Activated CD4-positive, alpha-beta T cell treated with anti-CD3 and anti-CD28 coated beads for 36 hours (primary cell): ENCODE measurements at regions of chr10 and their contacts with region 1.

Region 1: DNA sequence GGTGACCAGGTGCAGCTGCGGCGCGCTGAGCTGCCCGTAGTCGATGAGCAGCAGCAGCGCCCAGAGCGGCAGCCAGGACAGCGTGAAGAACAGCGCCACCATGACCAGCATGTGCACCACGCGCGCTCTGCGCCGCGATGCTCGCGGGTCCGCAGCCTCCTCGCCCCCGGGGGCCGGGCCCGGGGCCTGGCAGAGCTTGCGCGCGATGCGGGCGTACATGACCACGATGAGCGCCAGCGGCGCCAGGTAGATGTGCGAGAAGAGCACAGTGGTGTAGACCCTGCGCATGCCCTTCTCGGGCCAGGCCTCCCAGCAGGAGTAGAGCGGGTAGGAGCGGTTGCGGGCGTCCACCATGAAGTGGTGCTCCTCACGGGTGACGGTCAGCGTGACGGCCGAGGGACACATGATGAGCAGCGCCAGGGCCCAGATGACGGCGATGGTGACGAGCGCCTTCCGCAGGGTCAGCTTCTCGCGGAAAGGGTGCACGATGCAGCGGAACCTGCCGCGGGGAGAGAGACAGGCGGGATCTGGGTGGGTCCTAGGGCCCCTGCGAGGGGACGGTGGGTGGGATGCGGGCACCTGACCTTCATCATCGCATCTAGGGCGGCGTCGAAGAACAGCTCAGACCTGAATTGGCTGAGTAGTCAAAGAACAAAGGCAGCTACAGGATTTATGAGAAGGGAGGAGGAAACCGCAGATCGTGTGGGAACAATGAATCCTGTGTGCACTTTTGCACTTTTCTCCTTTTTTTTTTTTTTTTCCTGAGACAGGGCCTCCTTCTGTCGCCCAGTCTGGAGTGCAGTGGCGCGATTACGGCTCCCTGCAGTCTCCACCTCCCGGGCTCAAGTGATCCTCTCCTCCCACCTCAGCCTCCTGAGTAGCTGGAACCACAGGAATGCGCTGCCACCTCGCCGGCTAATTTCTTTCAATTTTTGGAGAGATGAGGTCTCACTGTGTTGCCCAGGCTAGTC is 22.4 kb upstream of the PPA1 start:
- DNase-seq: peak; percentile 45
- ATAC-seq: peak; percentile 67
- H3K4me3 Mint-ChIP-seq: peak overlapping the region; percentile 46
- H3K27ac Mint-ChIP-seq: no peak overlapping the region
- H3K4me1 Mint-ChIP-seq: peaks cover 6% of the 10 kb centered on the region
- H3K27me3 Mint-ChIP-seq: peaks cover 42% of the 10 kb centered on the region

Region 2: GRCh38 chr10:70267161-70267933 is 11.7 kb after region 1 on chr10:
- CTCF ChIA-PET with region 1: interaction called, 10 read pairs
- POLR2A ChIA-PET with region 1: no interaction called
- intact Hi-C with region 1: no loop called
- DNase-seq: peak; percentile 41
- ATAC-seq: peak; percentile 58
- H3K4me3 Mint-ChIP-seq: no peak overlapping the region
- H3K27ac Mint-ChIP-seq: peak overlapping the region; percentile 7
- H3K4me1 Mint-ChIP-seq: peaks cover 21% of the 10 kb centered on the region
- H3K27me3 Mint-ChIP-seq: no peaks in the 10 kb centered on the region